CD8-positive, alpha-beta memory T cell (primary cell): ENCODE measurements at regions of chr1 and their contacts with region 1.

Region 1: DNA sequence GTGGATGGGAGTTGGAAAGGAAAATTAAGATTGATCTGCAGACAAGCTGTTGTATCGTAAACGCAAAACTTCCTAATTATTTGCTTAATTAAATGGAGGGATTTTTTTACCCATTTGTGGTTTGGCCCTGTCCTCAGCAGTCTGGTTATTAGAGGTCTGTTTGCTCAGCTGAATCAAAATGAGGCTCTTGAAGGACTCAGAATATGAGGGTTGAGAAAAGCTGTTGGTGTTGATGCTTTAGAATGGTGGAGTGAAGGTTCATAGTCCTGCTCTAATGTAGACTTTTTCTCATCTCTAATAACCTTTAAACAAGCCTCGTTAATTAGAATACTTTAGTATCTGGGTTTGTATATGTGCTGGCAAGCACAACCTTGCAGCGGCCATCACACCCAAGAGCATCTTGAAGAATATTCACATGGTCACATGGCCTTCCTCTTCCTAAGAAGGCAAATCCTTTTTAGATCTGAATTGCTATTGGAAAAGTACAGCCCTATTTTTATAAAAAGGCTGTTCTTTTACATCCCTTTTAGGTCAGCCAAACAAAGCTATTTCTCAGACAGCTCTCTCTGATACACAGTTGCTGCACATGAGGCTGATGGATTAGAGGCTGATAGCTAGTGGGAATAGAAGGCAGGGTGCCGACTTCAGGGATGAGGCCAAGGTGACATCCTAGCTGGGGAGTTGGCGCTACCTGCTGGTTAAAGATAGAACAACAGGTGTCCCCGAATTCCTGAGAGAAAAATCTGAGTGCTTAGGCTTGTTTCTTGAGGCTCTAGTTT is 53.8 kb downstream of the MACF1 start:
- DNase-seq: peak; percentile 50 to 73 (median 55)
- H3K4me3 ChIP-seq: no peak overlapping the region
- H3K4me3 Mint-ChIP-seq: no peak overlapping the region
- H3K27ac ChIP-seq: no peak overlapping the region
- H3K27ac Mint-ChIP-seq: peak overlapping the region; percentile 63 to 90 (median 82)
- H3K4me1 ChIP-seq: peaks cover 32% of the 10 kb centered on the region
- H3K4me1 Mint-ChIP-seq: peaks cover 32 to 48% (median 38%) of the 10 kb centered on the region in 3 donors
- H3K27me3 ChIP-seq: no peaks in the 10 kb centered on the region
- H3K27me3 Mint-ChIP-seq: no peaks in the 10 kb centered on the region

Region 2: DNA sequence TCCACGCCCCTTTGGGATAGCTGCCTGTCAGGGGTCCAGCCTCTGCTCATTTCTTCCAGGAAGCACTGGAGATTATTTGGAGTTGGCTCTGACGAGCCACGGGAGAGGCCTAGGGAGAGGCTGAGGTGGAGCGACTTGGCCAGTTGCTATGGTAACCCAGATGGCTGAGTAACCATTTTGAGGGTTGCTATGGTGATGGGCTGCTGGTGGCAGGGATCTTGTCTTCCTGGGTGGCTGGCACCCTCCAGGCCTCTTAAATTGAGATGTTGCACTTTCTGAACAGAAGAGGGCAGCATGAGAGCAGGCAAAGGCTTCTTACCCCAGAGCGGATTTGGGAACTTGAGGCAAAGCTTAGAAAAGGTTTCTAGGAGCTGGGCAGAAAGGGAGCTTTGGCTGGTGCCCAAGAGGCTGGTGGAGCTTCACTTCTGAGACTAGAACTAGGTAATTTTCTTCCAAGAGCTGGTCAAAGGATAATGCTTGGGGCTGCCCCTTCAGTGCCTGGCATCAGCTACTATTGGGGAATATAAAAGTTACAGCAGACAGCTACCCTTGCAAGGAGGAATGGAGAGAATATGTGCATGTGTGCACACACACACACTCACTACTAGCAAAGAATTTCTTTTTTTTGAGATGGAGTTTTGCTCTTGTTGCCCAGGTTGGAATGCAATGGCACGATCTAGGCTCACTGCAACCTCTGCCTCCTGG is 159.6 kb before region 1 on chr1:
- CTCF ChIA-PET with region 1: interaction called, 16 read pairs
- POLR2A ChIA-PET with region 1: no interaction called
- DNase-seq: peak; percentile 29 to 77 (median 67)
- H3K4me3 ChIP-seq: no peak overlapping the region
- H3K4me3 Mint-ChIP-seq: peak overlapping the region in 1 of 7 donors; percentile 51
- H3K27ac ChIP-seq: no peak overlapping the region
- H3K27ac Mint-ChIP-seq: peak overlapping the region in 5 of 8 donors; percentile 6 to 64 (median 27)
- H3K4me1 ChIP-seq: peaks cover 16% of the 10 kb centered on the region
- H3K4me1 Mint-ChIP-seq: peaks cover 10 to 17% (median 15%) of the 10 kb centered on the region in 3 donors
- H3K27me3 ChIP-seq: no peaks in the 10 kb centered on the region
- H3K27me3 Mint-ChIP-seq: peaks cover 0 to 2% of the 10 kb centered on the region in 2 donors

Region 3: GRCh38 chr1:39183503-39184353 is 74.6 kb before region 1 on chr1:
- CTCF ChIA-PET with region 1: interaction called, 214 read pairs
- POLR2A ChIA-PET with region 1: interaction called, 3 read pairs
- DNase-seq: peak; percentile 68 to 90 (median 83)
- H3K4me3 ChIP-seq: no peak overlapping the region
- H3K4me3 Mint-ChIP-seq: peak overlapping the region in 3 of 7 donors; percentile 0 to 30 (median 2)
- H3K27ac ChIP-seq: peak overlapping the region; percentile 4
- H3K27ac Mint-ChIP-seq: peak overlapping the region; percentile 84 to 96 (median 92)
- H3K4me1 ChIP-seq: peaks cover 20% of the 10 kb centered on the region
- H3K4me1 Mint-ChIP-seq: peaks cover 24 to 39% (median 34%) of the 10 kb centered on the region in 3 donors
- H3K27me3 ChIP-seq: no peaks in the 10 kb centered on the region
- H3K27me3 Mint-ChIP-seq: peaks cover 0 to 2% of the 10 kb centered on the region in 2 donors

Region 4: DNA sequence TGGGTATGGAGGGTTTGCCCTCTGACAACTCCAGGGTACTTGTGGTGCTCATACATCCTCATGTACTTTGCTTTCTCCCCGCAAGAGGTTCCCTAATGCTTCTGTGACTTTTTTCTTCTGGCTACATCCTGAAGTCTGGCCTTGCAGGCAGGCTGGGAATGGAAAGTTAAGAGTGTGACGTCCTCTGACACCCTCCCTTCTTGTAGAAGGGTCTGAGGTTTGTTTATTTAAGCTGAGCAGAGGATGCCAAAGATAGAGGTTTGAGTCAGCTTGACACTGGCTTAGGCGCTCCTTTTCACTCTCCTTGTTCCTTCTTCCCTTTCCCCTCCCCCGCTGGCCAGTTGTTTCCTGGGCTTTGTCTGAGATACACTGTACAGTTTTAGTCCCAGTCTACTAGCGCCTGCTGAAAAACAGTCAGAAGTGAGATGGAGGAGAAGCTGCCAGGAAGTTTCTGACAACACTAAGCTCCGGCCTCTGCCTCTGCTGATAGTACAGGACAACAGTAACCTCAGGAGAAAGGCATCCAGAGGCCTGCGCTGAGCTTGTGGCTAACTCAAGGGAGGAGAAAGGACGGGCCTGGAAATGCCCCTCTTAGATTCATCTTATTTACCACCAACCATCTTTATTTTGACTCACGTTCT is 53.8 kb before region 1 on chr1 and contains the start of gene MACF1:
- CTCF ChIA-PET with region 1: interaction called, 29 read pairs
- POLR2A ChIA-PET with region 1: no interaction called
- DNase-seq: peak in 1 of 5 donors; percentile 21
- H3K4me3 ChIP-seq: peak within 1 kb of the TSS; percentile 69
- H3K4me3 Mint-ChIP-seq: peak within 1 kb of the TSS; percentile 90 to 96 (median 93)
- H3K27ac ChIP-seq: peak within 1 kb of the TSS; percentile 69
- H3K27ac Mint-ChIP-seq: peak within 1 kb of the TSS; percentile 90 to 99 (median 94)
- H3K4me1 ChIP-seq: peaks cover 30% of the 10 kb centered on the region
- H3K4me1 Mint-ChIP-seq: peaks cover 49 to 73% (median 67%) of the 10 kb centered on the region in 3 donors
- H3K27me3 ChIP-seq: no peaks in the 10 kb centered on the region
- H3K27me3 Mint-ChIP-seq: no peaks in the 10 kb centered on the region
- total RNA-seq, gene MACF1: 151 to 154 TPM

Region 5: GRCh38 chr1:39214998-39215873 is 43.1 kb before region 1 on chr1:
- CTCF ChIA-PET with region 1: interaction called, 29 read pairs
- POLR2A ChIA-PET with region 1: no interaction called
- DNase-seq: peak in 4 of 5 donors; percentile 30 to 58 (median 40)
- H3K4me3 ChIP-seq: peak overlapping the region; percentile 54
- H3K4me3 Mint-ChIP-seq: peak overlapping the region; percentile 84 to 96 (median 90)
- H3K27ac ChIP-seq: peak overlapping the region; percentile 62
- H3K27ac Mint-ChIP-seq: peak overlapping the region; percentile 76 to 96 (median 92)
- H3K4me1 ChIP-seq: peaks cover 46% of the 10 kb centered on the region
- H3K4me1 Mint-ChIP-seq: peaks cover 53 to 70% (median 69%) of the 10 kb centered on the region in 3 donors
- H3K27me3 ChIP-seq: no peaks in the 10 kb centered on the region
- H3K27me3 Mint-ChIP-seq: no peaks in the 10 kb centered on the region

Region 6: DNA sequence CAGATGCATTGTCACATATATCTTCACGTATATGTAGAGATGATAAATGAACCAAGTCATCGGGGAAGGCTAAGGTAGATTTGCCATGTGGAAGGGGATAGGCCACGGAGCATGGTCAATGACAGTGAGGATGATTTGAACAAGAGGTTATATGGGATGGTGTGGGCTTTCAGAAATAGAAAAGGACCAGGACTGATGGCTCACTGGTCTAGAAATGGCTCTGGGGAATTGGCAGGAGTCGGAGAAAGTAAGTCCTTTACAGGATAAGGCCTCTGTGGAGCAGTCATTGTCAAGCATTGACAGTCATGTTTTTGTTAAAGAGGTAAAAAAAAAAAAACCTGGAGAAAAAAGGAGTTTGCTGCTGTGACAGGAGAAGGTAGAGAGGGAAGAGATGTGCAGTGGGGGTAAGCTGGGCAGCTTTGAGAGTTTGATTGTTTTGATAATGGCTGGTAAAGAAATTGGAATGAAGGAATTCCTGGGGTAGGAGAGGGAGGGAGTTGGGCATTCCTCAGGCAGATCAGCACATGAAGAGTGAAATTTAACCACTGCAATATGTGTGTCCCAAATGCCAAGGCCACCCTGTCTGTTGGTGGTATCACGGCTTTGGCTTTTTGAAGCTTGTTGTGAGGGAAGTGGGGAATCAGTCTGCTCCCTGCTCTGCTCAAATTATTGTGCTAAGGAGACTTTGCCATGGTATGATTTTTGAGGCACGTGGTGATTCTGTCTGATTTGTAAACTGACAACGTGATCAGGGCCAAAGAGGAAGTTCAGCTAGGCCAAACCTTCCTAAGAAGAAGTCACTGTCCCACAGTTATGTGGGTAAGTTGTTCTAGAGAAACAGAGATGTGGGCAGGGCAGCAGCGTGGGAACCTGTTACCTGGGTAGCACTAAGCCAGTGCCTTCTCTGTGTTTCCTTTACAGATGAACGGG is 27.8 kb before region 1 on chr1:
- CTCF ChIA-PET with region 1: interaction called, 13 read pairs
- POLR2A ChIA-PET with region 1: no interaction called
- DNase-seq: peak in 3 of 5 donors; percentile 2 to 11 (median 4)
- H3K4me3 ChIP-seq: no peak overlapping the region
- H3K4me3 Mint-ChIP-seq: peak overlapping the region; percentile 2 to 78 (median 54)
- H3K27ac ChIP-seq: no peak overlapping the region
- H3K27ac Mint-ChIP-seq: peak overlapping the region; percentile 52 to 92 (median 86)
- H3K4me1 ChIP-seq: peaks cover 38% of the 10 kb centered on the region
- H3K4me1 Mint-ChIP-seq: peaks cover 59 to 75% (median 74%) of the 10 kb centered on the region in 3 donors
- H3K27me3 ChIP-seq: no peaks in the 10 kb centered on the region
- H3K27me3 Mint-ChIP-seq: no peaks in the 10 kb centered on the region

Region 7: GRCh38 chr1:39238476-39238875 is 19.9 kb before region 1 on chr1:
- CTCF ChIA-PET with region 1: interaction called, 15 read pairs
- POLR2A ChIA-PET with region 1: no interaction called
- DNase-seq: no peak
- H3K4me3 ChIP-seq: no peak overlapping the region
- H3K4me3 Mint-ChIP-seq: peak overlapping the region in 1 of 7 donors; percentile 37
- H3K27ac ChIP-seq: no peak overlapping the region
- H3K27ac Mint-ChIP-seq: peak overlapping the region in 7 of 8 donors; percentile 15 to 89 (median 72)
- H3K4me1 ChIP-seq: peaks cover 20% of the 10 kb centered on the region
- H3K4me1 Mint-ChIP-seq: peaks cover 58 to 76% (median 74%) of the 10 kb centered on the region in 3 donors
- H3K27me3 ChIP-seq: no peaks in the 10 kb centered on the region
- H3K27me3 Mint-ChIP-seq: no peaks in the 10 kb centered on the region